ENCODE measurements at regions of chr17 and their contacts with region 1.

Region 1: DNA sequence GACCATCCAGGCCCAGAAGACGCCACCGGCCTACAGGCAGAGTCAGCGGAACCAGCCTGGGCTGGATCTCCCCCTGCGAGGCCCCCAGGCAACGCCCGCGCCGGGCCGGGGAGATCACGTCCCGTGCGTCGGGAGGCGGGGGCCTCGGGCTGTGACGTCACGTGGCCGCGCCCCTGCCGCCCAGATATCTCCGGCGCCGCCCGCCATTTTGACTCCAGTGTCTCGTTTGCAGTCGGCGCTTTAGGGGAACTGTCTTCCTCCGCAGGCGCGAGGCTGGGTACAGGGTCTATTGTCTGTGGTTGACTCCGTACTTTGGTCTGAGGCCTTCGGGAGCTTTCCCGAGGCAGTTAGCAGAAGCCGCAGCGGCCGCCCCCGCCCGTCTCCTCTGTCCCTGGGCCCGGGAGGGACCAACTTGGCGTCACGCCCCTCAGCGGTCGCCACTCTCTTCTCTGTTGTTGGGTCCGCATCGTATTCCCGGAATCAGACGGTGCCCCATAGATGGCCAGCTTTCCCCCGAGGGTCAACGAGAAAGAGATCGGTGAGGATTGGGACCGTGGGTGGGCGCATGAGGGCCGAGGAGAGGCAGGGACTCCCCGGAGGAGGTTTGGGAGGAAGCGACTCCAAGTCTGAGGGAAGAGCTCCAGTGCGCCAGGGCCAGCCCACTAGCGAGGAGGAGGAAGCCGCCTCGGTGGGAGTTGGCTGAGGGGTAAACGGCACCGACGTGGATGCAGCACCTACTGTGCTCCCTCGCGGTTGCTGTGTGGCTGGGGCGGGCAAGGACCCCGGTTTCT is at the start of gene WSB1:
- DNase-seq: peak; percentile 93
- H3K4me3 Mint-ChIP-seq: peak within 1 kb of the TSS; percentile 99
- H3K27ac Mint-ChIP-seq: peak within 1 kb of the TSS; percentile 98
- H3K4me1 Mint-ChIP-seq: peaks cover 36% of the 10 kb centered on the region
- H3K27me3 Mint-ChIP-seq: no peaks in the 10 kb centered on the region
- total RNA-seq, gene WSB1: 143 to 155 TPM

Region 2: DNA sequence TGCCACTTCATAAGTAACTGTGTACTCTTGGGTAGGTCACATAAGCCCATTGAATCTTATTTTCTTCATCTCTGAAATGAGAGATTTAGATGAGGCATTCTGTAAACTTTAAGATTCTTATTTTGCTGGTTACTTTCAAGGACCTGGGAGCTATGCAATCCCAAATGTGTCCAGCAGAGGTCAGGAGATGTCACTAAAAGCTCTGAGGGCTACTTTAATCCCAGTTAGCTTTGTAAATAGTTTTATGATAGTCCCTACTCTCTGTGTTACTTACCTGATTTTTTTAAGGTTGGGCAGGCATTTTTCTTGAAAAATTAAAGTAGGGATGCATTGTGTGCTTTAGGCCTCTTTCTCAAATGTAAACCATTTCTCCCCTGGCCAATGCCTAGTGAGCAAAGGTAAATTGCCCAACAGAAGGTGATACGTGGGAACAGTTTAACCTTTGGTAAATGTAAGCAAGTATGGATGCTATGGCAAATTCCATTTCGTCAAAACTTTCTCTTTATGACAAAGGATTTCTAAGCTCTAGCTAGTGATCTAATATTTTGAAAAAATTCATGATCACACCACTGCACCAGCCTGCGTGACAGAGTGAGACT is 57.3 kb before region 1 on chr17:
- CTCF ChIA-PET with region 1: interaction called, 30 read pairs
- POLR2A ChIA-PET with region 1: interaction called, 53 read pairs
- DNase-seq: peak; percentile 77
- H3K4me3 Mint-ChIP-seq: no peak overlapping the region
- H3K27ac Mint-ChIP-seq: no peak overlapping the region
- H3K4me1 Mint-ChIP-seq: peaks cover 33% of the 10 kb centered on the region
- H3K27me3 Mint-ChIP-seq: peaks cover 2% of the 10 kb centered on the region

Region 3: GRCh38 chr17:27306276-27306835 is 12.3 kb after region 1 on chr17:
- CTCF ChIA-PET with region 1: interaction called, 4 read pairs
- POLR2A ChIA-PET with region 1: interaction called, 35 read pairs
- DNase-seq: no peak
- H3K4me3 Mint-ChIP-seq: no peak overlapping the region
- H3K27ac Mint-ChIP-seq: no peak overlapping the region
- H3K4me1 Mint-ChIP-seq: peaks cover 7% of the 10 kb centered on the region
- H3K27me3 Mint-ChIP-seq: no peaks in the 10 kb centered on the region

Region 4: GRCh38 chr17:27353461-27354050 is 59.5 kb after region 1 on chr17:
- CTCF ChIA-PET with region 1: interaction called, 6 read pairs
- POLR2A ChIA-PET with region 1: interaction called, 23 read pairs
- DNase-seq: peak; percentile 90
- H3K4me3 Mint-ChIP-seq: peak overlapping the region; percentile 84
- H3K27ac Mint-ChIP-seq: peak overlapping the region; percentile 81
- H3K4me1 Mint-ChIP-seq: peaks cover 38% of the 10 kb centered on the region
- H3K27me3 Mint-ChIP-seq: no peaks in the 10 kb centered on the region

Region 5: DNA sequence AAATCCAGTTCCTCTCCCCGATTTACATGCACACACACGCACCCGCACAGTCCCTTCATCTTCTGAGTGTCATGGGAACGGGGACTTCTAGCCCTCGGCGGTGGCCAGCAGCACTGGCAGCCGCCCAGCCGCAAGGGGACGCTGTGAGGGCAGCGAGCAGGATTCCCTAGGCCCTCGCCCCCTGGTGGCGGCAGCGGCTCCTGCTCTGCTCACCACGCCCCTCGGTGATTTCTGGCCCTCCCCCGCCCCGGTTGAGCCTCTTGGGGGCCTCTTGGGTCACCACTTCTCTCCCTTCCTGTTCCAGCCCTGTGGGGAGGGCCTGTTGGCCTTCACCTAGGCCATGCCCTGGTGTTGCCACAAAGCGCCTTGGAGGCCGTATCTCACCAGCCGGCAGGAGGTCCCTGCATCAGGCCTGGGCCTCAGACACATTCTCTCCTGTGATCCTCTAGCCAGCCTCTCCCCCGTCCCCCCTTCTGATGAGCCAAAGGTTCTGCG is 87.0 kb after region 1 on chr17:
- CTCF ChIA-PET with region 1: no interaction called
- POLR2A ChIA-PET with region 1: no interaction called
- DNase-seq: peak; percentile 82
- H3K4me3 Mint-ChIP-seq: no peak overlapping the region
- H3K27ac Mint-ChIP-seq: no peak overlapping the region
- H3K4me1 Mint-ChIP-seq: peaks cover 2% of the 10 kb centered on the region
- H3K27me3 Mint-ChIP-seq: peaks cover 15% of the 10 kb centered on the region

Region 6: DNA sequence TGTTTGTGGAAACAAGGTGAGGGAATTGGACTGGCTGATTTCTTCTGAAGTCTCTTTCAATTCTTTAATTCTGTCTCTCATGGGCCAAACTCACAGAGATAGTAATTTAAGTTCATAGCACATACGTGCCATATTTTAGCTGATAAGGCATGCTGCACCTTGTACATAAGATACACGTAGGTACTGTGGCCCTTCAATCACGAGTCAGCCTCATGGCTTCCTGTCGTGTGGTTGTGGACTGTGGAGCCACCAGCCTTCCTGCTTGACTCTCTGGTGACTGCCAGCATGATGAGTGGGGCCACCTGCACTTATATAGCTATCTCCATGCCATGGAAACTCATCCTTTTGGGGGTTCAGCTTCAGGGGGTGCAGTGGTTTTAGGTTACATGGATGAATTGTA is 187.2 kb after region 1 on chr17:
- CTCF ChIA-PET with region 1: no interaction called
- POLR2A ChIA-PET with region 1: interaction called, 10 read pairs
- DNase-seq: peak; percentile 83
- H3K4me3 Mint-ChIP-seq: no peak overlapping the region
- H3K27ac Mint-ChIP-seq: peak overlapping the region; percentile 79
- H3K4me1 Mint-ChIP-seq: peaks cover 57% of the 10 kb centered on the region
- H3K27me3 Mint-ChIP-seq: no peaks in the 10 kb centered on the region